ENCODE measurements at regions of chr9 and their contacts with region 1.

Region 1: DNA sequence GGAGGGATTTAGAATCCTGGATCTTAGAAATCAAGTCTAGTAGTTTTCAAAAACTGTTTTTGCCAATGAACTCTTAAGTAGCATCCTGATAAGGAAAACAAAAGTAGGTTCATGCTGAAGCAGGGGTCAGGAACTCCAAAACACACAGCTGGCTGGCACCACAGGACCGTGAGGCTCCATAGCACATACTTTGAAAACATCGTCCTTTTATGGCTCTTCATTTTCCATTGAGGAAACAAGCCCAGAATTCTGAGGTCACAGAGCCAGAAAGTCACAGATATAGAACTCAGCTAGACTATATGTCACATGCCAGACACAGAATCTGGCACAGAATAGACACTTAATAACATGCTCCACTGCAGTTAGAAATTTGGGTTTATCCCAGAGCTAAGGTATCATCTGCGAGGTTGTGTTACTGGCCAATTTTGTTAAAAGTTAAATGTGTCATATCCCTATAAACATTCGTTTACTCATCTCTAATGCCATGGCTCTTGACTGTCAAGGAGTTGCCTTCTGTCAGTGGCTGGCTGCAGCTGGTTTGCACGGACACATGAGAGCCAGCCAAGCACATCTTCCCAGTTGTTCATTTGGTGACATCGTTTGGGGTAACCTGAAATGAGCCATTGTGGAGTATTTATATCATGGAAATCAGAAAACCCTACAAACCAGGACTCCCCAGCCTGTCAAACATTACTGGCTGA is 58.8 kb downstream of the FAM78A start:
- DNase-seq: no peak
- H3K4me3 ChIP-seq: no peak overlapping the region
- H3K27ac ChIP-seq: no peak overlapping the region
- H3K4me1 ChIP-seq: no peaks in the 10 kb centered on the region
- H3K27me3 ChIP-seq: no peaks in the 10 kb centered on the region
- CTCF ChIP-seq: no peak

Region 2: DNA sequence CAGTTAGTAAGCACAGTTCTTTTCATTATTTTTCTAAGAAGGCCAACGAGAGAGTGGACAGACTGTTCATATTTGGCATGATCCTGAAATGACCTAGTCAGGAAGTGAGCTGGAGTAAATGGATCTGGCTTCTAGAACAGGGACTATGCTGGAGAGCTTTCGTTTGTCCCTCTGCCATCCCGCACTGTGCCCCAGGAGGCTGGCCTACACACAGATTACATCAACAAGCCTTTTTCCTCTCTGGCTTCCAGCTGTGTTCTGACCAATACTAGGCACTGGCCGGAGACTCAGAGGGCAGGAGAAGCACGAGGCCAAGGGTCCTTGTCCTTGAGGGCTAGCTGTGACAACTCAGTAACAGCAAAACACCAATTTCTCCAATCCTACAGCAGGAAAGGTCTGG is 734.4 kb after region 1 on chr9:
- CTCF ChIA-PET with region 1: no interaction called
- POLR2A ChIA-PET with region 1: interaction called, 10 read pairs
- intact Hi-C with region 1: no loop called
- DNase-seq: no peak
- H3K4me3 ChIP-seq: no peak overlapping the region
- H3K27ac ChIP-seq: no peak overlapping the region
- H3K4me1 ChIP-seq: no peaks in the 10 kb centered on the region
- H3K27me3 ChIP-seq: no peaks in the 10 kb centered on the region
- CTCF ChIP-seq: no peak